Heart right ventricle (tissue), 16 donors: ENCODE measurements at regions of chr9 and their contacts with region 1.

Region 1: GRCh38 chr9:96344458-96345180 is 38.9 kb downstream of the SLC35D2 start:
- DNase-seq: peak; percentile 23 to 59
- ATAC-seq: peak; percentile 78 to 95 (median 92)
- H3K4me3 ChIP-seq: no peak overlapping the region
- H3K27ac ChIP-seq: peak overlapping the region in 9 of 10 donors; percentile 35 to 69 (median 49)
- H3K4me1 ChIP-seq: peaks cover 3 to 27% (median 17%) of the 10 kb centered on the region in 9 donors
- H3K27me3 ChIP-seq: no peaks in the 10 kb centered on the region
- CTCF ChIP-seq: no peak

Region 2: GRCh38 chr9:96080364-96080763 is 264.3 kb before region 1 on chr9:
- intact Hi-C with region 1: no loop called
- DNase-seq: no peak
- ATAC-seq: no peak
- H3K4me3 ChIP-seq: no peak overlapping the region
- H3K27ac ChIP-seq: no peak overlapping the region
- H3K4me1 ChIP-seq: no peaks in the 10 kb centered on the region
- H3K27me3 ChIP-seq: peaks cover 0 to 7% (median under 1%) of the 10 kb centered on the region in 7 donors
- CTCF ChIP-seq: no peak

Region 3: DNA sequence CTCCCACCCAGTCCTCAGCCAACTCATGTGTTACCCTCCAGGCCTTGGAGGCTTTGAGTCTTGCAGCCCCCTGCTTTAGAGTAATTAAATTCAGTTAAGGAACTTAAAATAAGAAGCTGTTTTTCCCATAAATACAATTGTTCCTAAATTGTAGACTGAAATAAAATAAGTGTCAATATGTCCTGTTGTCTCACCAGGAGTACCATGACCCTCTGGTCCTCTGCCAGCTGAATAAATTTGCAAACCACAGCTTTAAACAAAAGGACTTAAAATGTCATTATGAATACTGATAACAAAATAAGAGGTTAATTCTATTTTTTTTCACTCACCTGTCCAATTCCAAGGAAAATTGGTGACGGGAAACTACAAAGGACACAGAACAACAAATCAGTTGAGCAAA is 23.3 kb after region 1 on chr9:
- intact Hi-C with region 1: loop called in 1 of 10 experiments (anchors 1 kb)
- DNase-seq: no peak
- ATAC-seq: no peak
- H3K4me3 ChIP-seq: no peak overlapping the region
- H3K27ac ChIP-seq: no peak overlapping the region
- H3K4me1 ChIP-seq: no peaks in the 10 kb centered on the region
- H3K27me3 ChIP-seq: no peaks in the 10 kb centered on the region
- CTCF ChIP-seq: no peak